ENCODE measurements at regions of chr6 and their contacts with region 1.

Region 1: DNA sequence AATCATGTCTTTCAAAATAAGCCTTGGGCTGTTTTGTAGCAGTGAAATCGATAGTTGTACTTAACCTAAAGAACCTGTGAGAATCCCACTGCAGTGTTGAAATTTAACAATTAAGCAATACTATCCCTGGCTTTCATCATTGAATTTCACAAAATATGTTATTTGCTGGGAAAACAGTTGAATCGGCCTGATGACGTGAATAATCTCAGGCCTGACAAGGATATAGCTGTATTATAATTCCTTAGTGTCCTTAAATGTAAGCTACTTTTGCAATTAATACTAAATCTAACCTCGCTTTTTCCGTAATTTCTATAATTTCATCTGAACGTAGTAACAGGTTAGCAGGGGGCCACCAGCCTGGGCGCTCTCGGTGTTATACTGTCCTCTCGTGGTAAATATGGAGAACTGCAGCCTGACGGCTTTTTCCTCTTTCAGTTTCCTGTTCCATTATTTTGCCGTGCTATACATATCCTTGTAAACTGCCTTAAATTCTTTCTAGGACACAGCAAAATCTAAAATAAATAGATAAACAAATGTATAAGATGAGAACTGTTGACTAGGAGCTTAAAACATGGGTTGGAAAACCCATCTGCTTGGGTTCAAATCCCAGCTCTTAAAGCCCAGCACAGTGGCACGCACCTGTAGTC is 24.0 kb downstream of the MTFR2 start:
- DNase-seq: peak; percentile 36
- ATAC-seq: peak; percentile 89
- H3K4me3 ChIP-seq: peak overlapping the region in 1 of 2 experiments; percentile 23; a peak in 1 of 4 replicates
- H3K27ac ChIP-seq: no peak overlapping the region
- H3K4me1 ChIP-seq: peaks cover 0 to 7% of the 10 kb centered on the region in 2 experiments; a peak in 1 of 4 replicates
- H3K27me3 ChIP-seq: no peaks in the 10 kb centered on the region
- CTCF ChIP-seq: peak; percentile 93 to 100 (median 99)
- POLR2A ChIP-seq: no peak
- RAD21 ChIP-seq: peak; percentile 99

Region 2: GRCh38 chr6:135451693-135452092 is 774.5 kb before region 1 on chr6:
- CTCF ChIA-PET with region 1: interaction called, 4 read pairs
- POLR2A ChIA-PET with region 1: no interaction called
- RAD21 ChIA-PET with region 1: no interaction called
- intact Hi-C with region 1: loop called (anchors 1 kb)
- DNase-seq: peak; percentile 22
- ATAC-seq: no peak
- H3K4me3 ChIP-seq: no peak overlapping the region
- H3K27ac ChIP-seq: no peak overlapping the region
- H3K4me1 ChIP-seq: no peaks in the 10 kb centered on the region
- H3K27me3 ChIP-seq: no peaks in the 10 kb centered on the region
- CTCF ChIP-seq: peak; percentile 34 to 69 (median 43); a peak in 5 of 6 replicates
- POLR2A ChIP-seq: no peak
- RAD21 ChIP-seq: peak; percentile 63

Region 3: DNA sequence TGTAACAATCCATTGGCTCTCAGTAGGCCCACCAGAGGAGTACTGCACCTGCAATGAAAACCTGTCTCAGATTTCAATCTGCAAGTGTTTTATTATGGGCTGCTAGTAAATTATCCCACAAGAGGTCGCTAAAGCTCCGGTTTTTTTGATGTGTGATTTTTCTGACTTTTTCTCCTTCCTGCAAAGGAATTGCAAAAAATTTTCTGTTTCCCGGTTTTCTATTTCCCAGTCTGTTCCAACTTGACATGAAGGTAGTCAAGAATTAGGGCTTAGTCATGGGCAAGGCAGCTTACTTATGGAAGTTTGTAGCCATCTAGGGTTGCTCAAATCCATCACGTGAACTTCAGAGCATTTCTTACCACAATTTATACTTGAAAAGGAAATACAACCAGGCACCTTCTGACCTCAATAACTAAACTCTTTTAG is 690.1 kb before region 1 on chr6:
- CTCF ChIA-PET with region 1: interaction called, 21 read pairs
- POLR2A ChIA-PET with region 1: no interaction called
- RAD21 ChIA-PET with region 1: no interaction called
- intact Hi-C with region 1: loop called (anchors 1 kb)
- DNase-seq: peak; percentile 31
- ATAC-seq: peak; percentile 74
- H3K4me3 ChIP-seq: no peak overlapping the region
- H3K27ac ChIP-seq: no peak overlapping the region
- H3K4me1 ChIP-seq: peaks cover 0 to 14% of the 10 kb centered on the region in 2 experiments; a peak in 2 of 4 replicates
- H3K27me3 ChIP-seq: no peaks in the 10 kb centered on the region
- CTCF ChIP-seq: peak; percentile 61 to 79 (median 74); a peak in 5 of 6 replicates
- POLR2A ChIP-seq: no peak
- RAD21 ChIP-seq: peak; percentile 80

Region 4: GRCh38 chr6:135759831-135760230 is 466.3 kb before region 1 on chr6:
- CTCF ChIA-PET with region 1: no interaction called
- POLR2A ChIA-PET with region 1: no interaction called
- RAD21 ChIA-PET with region 1: no interaction called
- intact Hi-C with region 1: loop called (anchors 10 kb)
- DNase-seq: peak; percentile 15
- ATAC-seq: peak; percentile 64; the same call in 1 of the 2 replicates
- H3K4me3 ChIP-seq: no peak overlapping the region
- H3K27ac ChIP-seq: no peak overlapping the region
- H3K4me1 ChIP-seq: no peaks in the 10 kb centered on the region
- H3K27me3 ChIP-seq: no peaks in the 10 kb centered on the region
- CTCF ChIP-seq: peak; percentile 22 to 44 (median 32); a peak in 3 of 6 replicates
- POLR2A ChIP-seq: no peak
- RAD21 ChIP-seq: peak; percentile 61

Region 5: GRCh38 chr6:136031982-136032381 is 194.2 kb before region 1 on chr6:
- CTCF ChIA-PET with region 1: interaction called, 5 read pairs
- POLR2A ChIA-PET with region 1: no interaction called
- RAD21 ChIA-PET with region 1: no interaction called
- intact Hi-C with region 1: loop called (anchors 1 kb)
- DNase-seq: peak; percentile 6
- ATAC-seq: peak; percentile 83
- H3K4me3 ChIP-seq: no peak overlapping the region
- H3K27ac ChIP-seq: no peak overlapping the region
- H3K4me1 ChIP-seq: no peaks in the 10 kb centered on the region
- H3K27me3 ChIP-seq: no peaks in the 10 kb centered on the region
- CTCF ChIP-seq: peak; percentile 27 to 64 (median 60); a peak in 5 of 6 replicates
- POLR2A ChIP-seq: no peak
- RAD21 ChIP-seq: peak; percentile 45

Measured in HCT116 (cell line).